Activated naive CD8-positive, alpha-beta T cell treated with anti-CD3 and anti-CD28 coated beads, Interleukin-2, amount 10 ng/mL, durations not matched to agents 7 days and 5 days (primary cell): ENCODE measurements at regions of chr1 and their contacts with region 1.

Region 1: GRCh38 chr1:156728597-156729462 is at the start of gene ISG20L2:
- DNase-seq: peak; percentile 91
- ATAC-seq: peak; percentile 88
- H3K4me3 Mint-ChIP-seq: no peak within 1 kb of the TSS
- H3K27ac Mint-ChIP-seq: peak within 1 kb of the TSS; percentile 99
- H3K4me1 Mint-ChIP-seq: peaks cover 24% of the 10 kb centered on the region
- H3K27me3 Mint-ChIP-seq: no peaks in the 10 kb centered on the region
- total RNA-seq, gene ISG20L2: 44.1 to 47.1 TPM

Region 2: DNA sequence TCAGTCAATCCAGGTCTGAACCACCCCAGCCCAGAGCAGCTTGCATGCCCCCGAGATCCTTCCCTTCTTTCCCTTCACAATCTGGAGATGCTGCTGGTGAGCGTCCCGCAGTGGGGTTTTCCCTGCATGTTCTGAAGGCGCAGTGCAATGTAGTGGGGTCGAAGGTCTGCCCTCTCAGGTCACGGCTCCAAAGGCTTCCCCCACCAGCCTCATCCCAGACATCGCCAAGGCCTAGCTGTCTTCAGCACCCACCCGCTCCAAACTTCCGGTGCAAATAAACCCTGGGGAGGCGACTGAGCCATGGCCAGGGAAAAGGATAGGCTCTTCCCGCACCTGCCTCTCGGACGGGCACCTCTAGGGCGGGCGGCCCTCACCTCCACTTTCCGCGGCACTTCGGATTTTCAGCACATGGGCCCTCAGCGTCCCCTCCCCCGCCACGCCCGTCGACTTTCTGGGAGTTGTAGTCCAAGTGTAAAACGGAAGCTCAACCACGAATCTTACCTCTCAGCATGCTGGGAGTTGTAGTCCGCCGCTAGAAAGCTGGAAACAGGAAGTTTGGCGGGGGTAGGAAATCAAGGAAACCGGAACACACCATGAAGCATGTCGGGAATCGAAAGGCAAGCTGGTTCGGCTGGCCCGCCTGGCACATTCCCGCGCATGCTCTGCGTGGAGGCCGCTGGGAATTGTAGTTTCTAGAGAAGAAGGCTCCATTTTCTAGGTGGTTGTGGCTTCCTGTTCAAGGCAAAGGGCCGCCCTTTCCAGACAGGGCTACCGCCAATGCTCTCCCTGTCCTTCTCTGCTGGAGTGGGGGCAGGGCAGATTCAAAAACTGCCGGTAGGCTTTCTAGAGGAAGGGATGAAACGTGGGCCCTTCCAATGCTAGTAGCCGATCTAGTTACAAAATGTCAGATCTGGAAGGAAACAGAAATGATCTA is 12.1 kb after region 1 on chr1 and contains the start of gene MRPL24:
- POLR2A ChIA-PET with region 1: interaction called, 82 read pairs
- DNase-seq: peak; percentile 88
- ATAC-seq: peak; percentile 88
- H3K4me3 Mint-ChIP-seq: peak within 1 kb of the TSS; percentile 94
- H3K27ac Mint-ChIP-seq: peak within 1 kb of the TSS; percentile 94
- H3K4me1 Mint-ChIP-seq: peaks cover 29% of the 10 kb centered on the region
- H3K27me3 Mint-ChIP-seq: no peaks in the 10 kb centered on the region
- total RNA-seq, gene MRPL24: 45.0 to 51.1 TPM

Region 3: GRCh38 chr1:156751758-156752757 is 23.2 kb after region 1 on chr1:
- POLR2A ChIA-PET with region 1: interaction called, 68 read pairs
- DNase-seq: peak; percentile 93
- ATAC-seq: peak; percentile 84
- H3K4me3 Mint-ChIP-seq: peak overlapping the region; percentile 91
- H3K27ac Mint-ChIP-seq: peak overlapping the region; percentile 92
- H3K4me1 Mint-ChIP-seq: peaks cover 39% of the 10 kb centered on the region
- H3K27me3 Mint-ChIP-seq: no peaks in the 10 kb centered on the region

Region 4: DNA sequence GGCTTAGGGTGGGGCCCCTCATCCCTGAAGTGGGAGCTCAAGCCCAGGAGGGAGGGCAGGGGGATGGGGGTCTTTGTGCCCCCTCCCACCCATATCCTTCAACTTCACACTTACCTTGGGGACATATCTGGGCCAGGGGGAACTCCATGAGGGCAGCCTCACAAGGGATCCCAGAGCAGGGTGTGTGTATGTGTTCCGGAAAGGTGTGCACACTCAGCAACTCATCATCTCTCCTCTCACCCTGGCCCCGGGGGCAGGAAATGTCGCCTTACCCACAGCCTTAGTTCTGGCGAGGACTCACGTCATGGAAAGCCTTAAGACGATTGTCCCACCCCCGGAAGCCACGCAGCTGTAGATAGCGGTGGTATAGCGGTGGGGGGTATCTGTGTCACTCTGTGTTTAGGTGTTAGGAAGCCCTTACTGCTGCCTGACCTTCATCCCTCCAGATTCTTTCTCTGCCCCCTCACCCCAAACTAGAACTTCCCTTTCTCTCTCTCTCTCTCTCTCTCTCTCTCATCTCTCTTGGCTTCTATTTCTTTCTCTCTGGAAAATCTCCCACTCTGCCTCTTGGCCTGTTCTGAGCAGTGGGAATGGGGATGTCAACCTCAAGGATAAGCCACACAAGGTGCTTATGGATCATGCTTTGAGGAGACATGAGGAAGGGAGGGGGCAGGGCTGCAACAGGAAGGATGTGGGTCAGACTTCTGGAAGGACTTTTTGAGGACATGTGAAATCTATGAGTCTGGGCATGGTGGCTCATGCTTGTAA is 87.9 kb after region 1 on chr1 and contains the start of gene SH2D2A:
- POLR2A ChIA-PET with region 1: interaction called, 10 read pairs
- DNase-seq: peak; percentile 88
- ATAC-seq: peak; percentile 89
- H3K4me3 Mint-ChIP-seq: peak within 1 kb of the TSS; percentile 90
- H3K27ac Mint-ChIP-seq: peak within 1 kb of the TSS; percentile 100
- H3K4me1 Mint-ChIP-seq: peaks cover 48% of the 10 kb centered on the region
- H3K27me3 Mint-ChIP-seq: no peaks in the 10 kb centered on the region
- total RNA-seq, gene SH2D2A: 86.0 to 89.2 TPM